ENCODE measurements at regions of chr22 and their contacts with region 1.

Region 1: GRCh38 chr22:44080936-44081861 is 57.1 kb downstream of the PARVB start:
- DNase-seq: peak; percentile 84
- ATAC-seq: no peak

Region 2: DNA sequence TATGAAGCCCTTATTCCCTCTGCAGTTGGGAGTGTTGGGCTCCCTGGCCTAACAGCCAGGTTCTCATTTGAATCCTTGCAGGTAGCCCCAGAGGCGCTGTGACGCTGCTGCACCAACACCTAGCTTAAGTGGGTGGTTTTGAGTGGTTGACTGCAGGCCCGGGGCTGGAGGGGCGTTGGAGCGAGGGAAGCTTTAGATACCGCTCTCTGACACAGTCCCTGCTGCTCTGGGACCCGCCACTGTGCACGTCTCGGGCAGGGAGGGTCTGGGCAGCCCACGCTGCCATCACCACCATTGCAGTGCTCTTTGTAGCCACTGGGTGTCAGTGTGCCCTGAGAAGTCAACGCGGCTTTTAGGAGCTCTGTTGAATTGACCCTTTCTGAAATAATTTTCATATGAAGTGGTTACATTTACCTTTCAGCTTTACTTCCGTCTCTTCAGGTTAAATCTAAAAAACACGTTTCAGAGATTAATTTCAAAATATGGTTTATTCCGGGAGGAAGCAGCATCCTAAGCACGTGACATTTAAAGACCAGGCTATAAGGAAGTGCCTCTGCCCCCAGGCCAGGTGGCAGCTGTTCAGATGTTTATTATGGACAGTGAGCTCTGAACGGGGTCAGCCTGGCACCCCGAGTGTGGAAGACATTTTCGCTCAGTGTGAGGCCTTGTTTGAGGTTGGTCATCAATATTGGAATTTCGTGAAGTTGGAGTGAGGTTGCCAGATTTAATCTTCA is 88.0 kb before region 1 on chr22:
- intact Hi-C with region 1: loop called (anchors 2 kb)
- DNase-seq: no peak
- ATAC-seq: peak; percentile 70

Region 3: GRCh38 chr22:44026630-44027511 is 54.3 kb before region 1 on chr22:
- intact Hi-C with region 1: loop called (anchors 1 kb)
- DNase-seq: peak; percentile 92
- ATAC-seq: peak; percentile 52

Region 4: GRCh38 chr22:44049486-44050231 is 31.5 kb before region 1 on chr22:
- intact Hi-C with region 1: loop called (anchors 5 kb)
- DNase-seq: no peak
- ATAC-seq: peak; percentile 9

Region 5: DNA sequence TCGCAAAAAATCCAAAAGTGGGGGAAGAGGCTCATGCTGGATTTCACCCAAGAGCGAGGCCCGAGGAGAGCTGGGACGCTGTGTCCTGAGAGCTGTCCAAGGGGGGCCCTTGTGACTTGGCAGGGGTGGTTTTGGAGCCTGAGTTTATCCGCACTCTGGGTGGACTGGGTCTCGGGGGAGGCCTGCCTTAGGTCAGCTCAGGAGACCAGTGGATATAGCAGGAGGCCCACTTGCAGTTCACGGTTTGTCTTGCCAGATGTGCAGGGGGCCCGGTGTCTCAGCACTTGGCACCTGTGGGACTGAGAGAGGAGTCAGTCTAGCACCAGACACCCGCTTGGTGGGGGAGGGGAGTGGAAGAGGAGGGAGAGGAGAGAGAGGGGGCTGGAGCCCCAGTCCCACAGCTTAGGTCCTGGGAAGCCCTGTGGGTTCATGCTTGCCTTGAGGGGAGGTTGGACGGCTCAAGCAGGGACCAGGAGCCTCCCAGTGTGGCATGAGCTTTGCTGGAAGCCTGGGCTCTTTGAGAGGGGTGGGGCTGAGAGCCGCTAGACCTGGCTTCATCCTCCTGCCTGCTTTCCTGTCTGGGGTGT is 23.7 kb before region 1 on chr22:
- intact Hi-C with region 1: loop called (anchors 2 kb)
- DNase-seq: peak; percentile 91
- ATAC-seq: peak; percentile 96

Region 6: DNA sequence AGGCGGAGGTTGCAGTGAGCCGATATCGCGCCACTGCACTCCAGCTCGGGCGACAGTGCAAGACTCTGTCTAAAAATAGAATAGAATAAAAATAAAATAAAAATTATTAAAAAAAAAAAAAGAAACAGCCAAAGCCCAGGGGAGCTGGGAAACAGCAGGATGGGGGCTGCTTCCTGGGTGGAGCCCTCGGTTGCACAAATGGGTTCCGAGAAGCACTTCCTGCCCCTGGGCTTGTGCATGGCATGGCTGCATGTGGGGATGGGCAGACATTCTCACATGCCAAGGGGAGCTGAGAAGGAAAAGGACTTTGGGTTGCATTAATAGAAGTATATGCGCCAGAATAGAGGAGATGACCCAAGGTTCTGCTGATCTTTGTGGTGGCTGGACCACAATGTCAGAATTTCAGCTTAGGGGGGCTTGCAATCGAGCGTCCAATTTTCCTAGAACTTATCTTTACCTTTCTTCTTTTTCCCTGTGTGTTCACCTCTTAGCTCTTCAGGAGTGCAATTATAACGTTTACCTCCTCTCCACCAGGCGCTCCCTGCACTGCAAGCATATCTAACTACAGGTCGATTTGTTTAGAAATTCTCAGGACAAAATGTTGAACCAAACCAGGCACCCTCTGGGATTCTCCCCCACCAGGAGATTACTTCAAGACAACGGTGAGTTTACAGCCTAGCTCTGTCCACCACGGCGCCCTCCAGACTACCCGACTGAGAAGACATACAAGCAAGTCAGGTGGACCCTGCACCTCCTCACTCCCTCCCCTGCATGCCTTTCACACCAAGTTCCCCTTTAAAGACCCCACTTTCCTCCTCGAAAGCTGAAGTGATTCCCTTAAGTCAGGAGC is 178.4 kb after region 1 on chr22:
- intact Hi-C with region 1: no loop called
- DNase-seq: no peak
- ATAC-seq: no peak

Region 7: DNA sequence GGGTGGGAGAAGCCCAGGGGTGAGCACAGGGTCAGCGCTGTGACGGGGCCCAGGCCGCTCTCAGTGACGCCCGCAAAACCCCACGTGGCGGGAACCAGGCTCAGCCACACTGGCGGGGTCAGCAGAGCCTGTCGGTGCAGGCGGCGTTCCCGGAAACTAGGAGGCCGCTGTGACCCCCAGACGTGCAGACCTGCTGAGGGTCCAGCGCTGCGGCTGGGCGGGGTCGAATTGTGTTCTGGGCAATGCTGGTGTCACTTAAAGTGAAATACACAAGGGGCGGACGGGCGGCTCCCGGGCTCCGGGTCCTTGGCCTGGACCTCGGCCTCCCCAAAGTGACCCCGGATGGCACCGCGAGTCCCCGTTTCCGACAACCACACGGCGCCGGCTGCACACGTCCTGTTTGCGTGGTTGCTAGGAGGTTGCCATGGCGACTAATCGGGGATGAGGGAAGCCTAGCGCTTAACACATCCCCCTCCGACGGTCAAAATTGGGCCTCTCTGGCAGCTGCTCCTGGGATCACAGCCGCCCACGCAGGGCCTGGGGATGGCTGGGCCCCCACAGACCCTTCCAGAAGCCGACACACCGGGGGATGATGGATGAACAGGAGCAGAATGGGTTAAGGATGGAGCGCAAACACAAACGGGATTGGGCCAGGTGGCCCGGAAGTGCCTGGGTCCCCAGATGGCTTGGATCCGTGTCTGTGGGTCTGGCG is 539.1 kb after region 1 on chr22:
- intact Hi-C with region 1: loop called (anchors 5 kb)
- DNase-seq: peak; percentile 83
- ATAC-seq: peak; percentile 31